HEK293T (cell line): ENCODE measurements at regions of chr1 and their contacts with region 1.

Region 1: DNA sequence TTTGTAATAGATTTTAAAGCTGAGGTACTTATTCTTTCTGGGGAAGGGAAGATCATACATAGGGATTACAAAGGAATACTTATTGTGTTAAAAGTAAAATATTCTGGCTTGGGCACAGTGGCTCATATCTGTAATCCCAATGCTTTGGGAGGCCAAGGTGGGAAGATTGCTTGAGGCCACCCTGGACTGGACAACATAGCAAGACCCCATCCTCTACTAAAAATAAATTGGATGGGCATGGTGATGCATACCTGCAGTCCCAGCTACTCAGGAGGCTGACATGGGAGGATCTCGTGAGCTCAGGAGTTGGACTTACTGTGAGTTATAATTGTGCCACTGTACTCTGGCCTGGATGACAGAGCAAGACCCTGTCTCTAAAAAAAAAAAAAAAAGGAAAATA is 27.6 kb downstream of the GABPB2 start:
- DNase-seq: no peak

Region 2: GRCh38 chr1:151085953-151086559 is 12.1 kb before region 1 on chr1:
- CTCF ChIA-PET with region 1: interaction called, 14 read pairs
- POLR2A ChIA-PET with region 1: no interaction called
- DNase-seq: no peak